IMR-90 (cell line): ENCODE measurements at regions of chr19 and their contacts with region 1.

Region 1: GRCh38 chr19:50368649-50369570 is 3.5 kb upstream of the NAPSA start:
- DNase-seq: peak; percentile 83
- ATAC-seq: peak; percentile 95
- H3K4me3 ChIP-seq: peak overlapping the region; percentile 63
- H3K27ac ChIP-seq: peak overlapping the region; percentile 78
- H3K4me1 ChIP-seq: no peaks in the 10 kb centered on the region
- H3K27me3 ChIP-seq: no peaks in the 10 kb centered on the region
- CTCF ChIP-seq: peak; percentile 84
- POLR2A ChIP-seq: no peak
- RAD21 ChIP-seq: peak; percentile 85

Region 2: DNA sequence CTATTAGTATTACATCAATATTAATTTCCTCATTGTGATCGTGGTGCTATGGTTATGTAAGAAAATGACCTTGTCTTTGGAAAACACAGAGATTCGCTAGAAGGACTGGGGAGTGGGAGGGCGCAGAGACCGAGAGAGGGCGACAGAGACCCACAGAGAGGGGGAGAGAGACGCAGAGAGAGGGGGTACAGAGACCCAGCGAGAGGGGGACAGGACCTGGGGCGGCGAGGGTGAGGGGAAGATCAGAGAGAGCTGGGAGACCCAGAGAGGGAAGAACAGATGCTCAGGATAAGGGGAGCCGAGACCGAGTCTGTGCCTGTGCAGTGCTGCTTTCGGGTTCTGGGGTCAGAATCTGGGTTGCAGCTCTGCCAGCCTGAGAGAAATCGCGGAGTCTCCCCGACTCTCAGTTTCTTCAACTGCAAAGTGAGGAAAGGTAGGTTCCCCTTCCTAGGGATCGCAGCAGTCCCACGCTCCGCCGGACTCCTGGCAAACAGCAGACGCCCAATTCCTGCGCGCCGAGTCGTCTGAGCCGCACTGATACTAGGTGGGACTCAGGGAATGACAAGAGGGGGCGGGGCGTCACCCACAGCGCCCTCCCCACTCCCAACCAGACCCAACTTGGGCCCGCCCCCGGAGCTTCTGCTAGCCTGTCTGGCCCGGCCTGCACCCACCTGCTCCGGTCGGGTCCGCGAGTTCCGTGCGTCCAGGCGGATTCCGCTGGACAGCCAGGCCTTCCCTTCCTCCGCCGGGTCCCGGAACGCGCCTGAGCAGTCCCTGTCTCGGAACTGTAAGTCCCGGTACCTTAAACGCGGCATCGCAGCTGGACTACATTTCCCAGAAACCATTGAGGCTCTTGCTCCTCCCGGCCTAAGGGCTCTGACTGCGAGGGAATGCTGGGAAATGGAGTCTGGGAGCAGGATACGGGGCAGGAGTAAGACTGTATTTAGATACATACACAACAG is 221.2 kb before region 1 on chr19:
- CTCF ChIA-PET with region 1: no interaction called
- POLR2A ChIA-PET with region 1: no interaction called
- dilution Hi-C with region 1: no loop called
- in situ Hi-C with region 1: no loop called
- intact Hi-C with region 1: no loop called
- DNase-seq: peak; percentile 92
- ATAC-seq: peak; percentile 98
- H3K4me3 ChIP-seq: peak overlapping the region; percentile 58
- H3K27ac ChIP-seq: no peak overlapping the region
- H3K4me1 ChIP-seq: no peaks in the 10 kb centered on the region
- H3K27me3 ChIP-seq: no peaks in the 10 kb centered on the region
- CTCF ChIP-seq: peak; percentile 38
- POLR2A ChIP-seq: no peak
- RAD21 ChIP-seq: peak; percentile 30; the same call in 1 of the 2 replicates

Region 3: DNA sequence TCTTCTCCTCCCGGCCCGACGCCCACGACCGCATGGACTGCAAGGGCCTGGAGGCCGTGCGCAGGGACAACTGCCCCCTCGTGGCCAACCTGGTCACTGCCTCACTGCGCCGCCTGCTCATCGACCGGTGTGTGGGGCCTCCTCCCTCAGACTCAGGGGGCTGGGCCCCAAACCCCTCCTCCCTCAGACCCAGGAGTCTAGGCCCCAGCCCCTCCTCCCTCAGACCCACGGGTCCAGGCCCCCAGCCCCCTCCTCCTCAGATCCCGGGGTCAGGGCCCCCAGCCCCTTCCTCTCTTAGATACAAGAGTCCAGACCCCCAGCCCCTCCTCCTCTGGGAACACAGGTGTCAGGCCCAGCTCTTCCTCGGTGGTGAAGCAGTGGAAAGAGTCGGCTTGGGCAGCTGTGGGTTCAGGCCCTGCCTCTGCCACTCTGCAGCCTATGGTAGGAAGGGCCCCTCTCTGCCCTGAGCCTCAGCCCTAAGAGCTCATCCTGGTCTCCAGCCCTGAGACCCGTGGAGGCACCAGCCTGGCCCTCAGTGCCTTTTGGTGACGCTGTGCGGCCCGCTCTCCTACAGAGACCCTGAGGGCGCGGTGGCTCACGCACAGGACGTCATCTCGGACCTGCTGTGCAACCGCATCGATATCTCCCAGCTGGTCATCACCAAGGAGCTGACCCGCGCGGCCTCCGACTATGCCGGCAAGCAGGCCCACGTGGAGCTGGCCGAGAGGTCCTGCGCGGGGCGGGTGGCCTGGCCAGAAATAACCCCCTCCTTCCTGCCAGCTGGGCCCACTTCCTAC is 46.2 kb after region 1 on chr19:
- CTCF ChIA-PET with region 1: no interaction called
- POLR2A ChIA-PET with region 1: no interaction called
- dilution Hi-C with region 1: no loop called
- in situ Hi-C with region 1: no loop called
- intact Hi-C with region 1: loop called (anchors 1 kb)
- DNase-seq: peak; percentile 54
- ATAC-seq: peak; percentile 94
- H3K4me3 ChIP-seq: no peak overlapping the region
- H3K27ac ChIP-seq: no peak overlapping the region
- H3K4me1 ChIP-seq: no peaks in the 10 kb centered on the region
- H3K27me3 ChIP-seq: peaks cover 17% of the 10 kb centered on the region
- CTCF ChIP-seq: peak; percentile 71
- POLR2A ChIP-seq: no peak
- RAD21 ChIP-seq: peak; percentile 61

Region 4: GRCh38 chr19:50461066-50461875 is 92.4 kb after region 1 on chr19:
- CTCF ChIA-PET with region 1: interaction called, 8 read pairs
- POLR2A ChIA-PET with region 1: no interaction called
- dilution Hi-C with region 1: no loop called
- in situ Hi-C with region 1: loop called (anchors 5 kb)
- intact Hi-C with region 1: loop called (anchors 1 kb)
- DNase-seq: peak; percentile 64
- ATAC-seq: peak; percentile 91
- H3K4me3 ChIP-seq: no peak overlapping the region
- H3K27ac ChIP-seq: no peak overlapping the region
- H3K4me1 ChIP-seq: no peaks in the 10 kb centered on the region
- H3K27me3 ChIP-seq: peaks cover 14% of the 10 kb centered on the region; the same call in 1 of the 2 replicates
- CTCF ChIP-seq: peak; percentile 84
- POLR2A ChIP-seq: no peak
- RAD21 ChIP-seq: peak; percentile 80

Region 5: DNA sequence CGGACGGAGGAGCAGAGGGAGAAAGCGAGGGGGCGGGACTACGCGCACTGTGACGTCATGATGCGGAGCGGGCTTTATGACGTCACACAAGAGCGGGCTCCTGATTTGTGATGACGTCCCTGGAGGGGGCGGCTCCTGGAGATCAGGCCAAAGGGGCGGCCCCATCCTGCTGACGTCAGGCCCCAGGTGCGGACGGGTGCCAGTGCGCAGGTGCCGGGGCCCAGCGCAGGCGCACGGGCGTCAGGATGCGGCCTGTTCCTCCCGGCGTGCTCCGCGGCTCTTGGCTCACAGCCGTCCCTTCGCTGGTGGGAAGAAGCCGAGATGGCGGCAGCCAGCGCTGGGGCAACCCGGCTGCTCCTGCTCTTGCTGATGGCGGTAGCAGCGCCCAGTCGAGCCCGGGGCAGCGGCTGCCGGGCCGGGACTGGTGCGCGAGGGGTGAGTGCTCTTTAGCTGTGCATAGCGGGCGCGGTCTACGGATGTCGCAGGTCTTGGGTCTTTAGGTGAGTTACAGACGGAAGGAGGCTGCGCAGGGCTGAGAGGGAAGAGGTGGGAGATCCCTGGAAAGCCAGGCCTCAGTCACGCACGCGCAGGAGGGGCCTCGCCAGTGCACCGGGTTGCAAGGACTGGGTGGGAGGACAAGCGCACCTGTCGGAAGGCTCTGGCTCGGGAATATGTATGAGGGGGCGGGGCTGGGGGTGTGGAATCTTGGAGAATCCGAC is 107.5 kb after region 1 on chr19 and contains the starts of genes EMC10 and GARIN5A:
- CTCF ChIA-PET with region 1: no interaction called
- POLR2A ChIA-PET with region 1: no interaction called
- dilution Hi-C with region 1: no loop called
- in situ Hi-C with region 1: no loop called
- intact Hi-C with region 1: loop called (anchors 5 kb)
- DNase-seq: peak; percentile 94
- ATAC-seq: peak; percentile 94
- H3K4me3 ChIP-seq: peak within 1 kb of the TSS; percentile 87
- H3K27ac ChIP-seq: peak within 1 kb of the TSS; percentile 60; the same call in 1 of the 2 replicates
- H3K4me1 ChIP-seq: 0 out of 2 replicates have a peak, but pooled peaks cover 2% of the 10 kb centered on the region
- H3K27me3 ChIP-seq: no peaks in the 10 kb centered on the region
- CTCF ChIP-seq: no peak
- POLR2A ChIP-seq: peak; percentile 80
- RAD21 ChIP-seq: no peak
- total RNA-seq, gene EMC10: 11.3 and 12.2 TPM in 2 replicates
- total RNA-seq, gene GARIN5A: 0.28 TPM in 1 of 2 replicates, not detected in the other

Region 6: GRCh38 chr19:50705422-50706019 is 336.6 kb after region 1 on chr19:
- CTCF ChIA-PET with region 1: no interaction called
- POLR2A ChIA-PET with region 1: no interaction called
- dilution Hi-C with region 1: no loop called
- in situ Hi-C with region 1: loop called (anchors 10 kb)
- intact Hi-C with region 1: loop called (anchors 2 kb)
- DNase-seq: peak; percentile 76
- ATAC-seq: peak; percentile 97
- H3K4me3 ChIP-seq: no peak overlapping the region
- H3K27ac ChIP-seq: no peak overlapping the region
- H3K4me1 ChIP-seq: peaks cover 1% of the 10 kb centered on the region; the same call in 1 of the 2 replicates
- H3K27me3 ChIP-seq: no peaks in the 10 kb centered on the region
- CTCF ChIP-seq: peak; percentile 87
- POLR2A ChIP-seq: no peak; the same call in 1 of the 2 replicates
- RAD21 ChIP-seq: peak; percentile 87